ENCODE measurements at regions of chr14 and their contacts with region 1.

Region 1: DNA sequence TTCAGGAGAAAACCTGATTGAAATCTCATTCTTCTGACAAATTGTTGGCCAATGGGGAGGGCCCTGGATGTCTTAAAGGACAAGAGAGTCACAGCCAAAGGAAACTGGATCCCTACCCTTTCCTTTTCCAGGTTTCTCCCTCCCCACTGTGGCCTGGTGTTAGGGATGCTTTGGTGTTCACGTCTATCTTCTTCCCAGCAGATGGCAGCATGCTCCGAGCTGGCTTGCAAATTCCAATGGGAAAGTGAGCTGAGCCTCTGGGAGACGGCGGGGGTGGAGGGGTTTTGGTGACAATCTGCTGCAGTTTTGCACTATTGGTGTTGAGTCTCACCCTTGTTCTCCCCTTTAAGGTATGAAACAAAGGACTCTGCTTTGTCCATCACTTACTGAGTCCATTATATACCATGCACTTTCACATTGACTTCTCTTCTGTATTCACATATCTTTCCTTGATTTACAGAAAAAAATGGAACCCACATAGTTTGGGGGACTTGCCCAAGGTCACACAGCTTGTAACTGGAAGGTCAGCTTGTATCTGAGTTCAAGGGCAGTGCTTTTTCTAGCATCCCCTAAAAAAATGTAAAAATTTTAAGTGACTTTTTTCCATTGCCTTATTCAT is 39.3 kb downstream of the CCDC177 start:
- DNase-seq: no peak
- H3K4me3 ChIP-seq: no peak overlapping the region
- H3K27me3 ChIP-seq: peaks cover 10% of the 10 kb centered on the region
- CTCF ChIP-seq: peak; percentile 86

Region 2: DNA sequence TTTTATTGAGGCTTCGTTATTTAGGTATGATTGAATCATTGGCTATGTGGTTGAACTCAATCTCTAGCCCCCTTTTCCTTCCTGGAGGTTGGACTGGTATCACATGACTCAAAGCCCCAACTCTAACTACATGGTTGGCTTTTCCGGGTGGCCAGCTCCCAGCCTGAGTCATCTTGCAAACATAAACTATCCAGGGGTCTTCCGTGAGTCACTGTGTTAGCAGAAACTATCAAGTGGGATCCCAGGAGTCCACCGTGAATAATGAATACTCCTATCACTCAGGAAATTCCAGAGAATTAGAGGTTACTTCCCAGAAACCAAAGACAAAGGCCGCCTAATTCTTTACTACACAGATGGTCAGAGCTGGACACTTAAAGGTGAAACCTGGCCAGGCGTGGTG is 70.5 kb before region 1 on chr14:
- CTCF ChIA-PET with region 1: no interaction called
- POLR2A ChIA-PET with region 1: no interaction called
- DNase-seq: peak; percentile 25
- H3K4me3 ChIP-seq: no peak overlapping the region
- H3K27me3 ChIP-seq: no peaks in the 10 kb centered on the region
- CTCF ChIP-seq: no peak

Region 3: DNA sequence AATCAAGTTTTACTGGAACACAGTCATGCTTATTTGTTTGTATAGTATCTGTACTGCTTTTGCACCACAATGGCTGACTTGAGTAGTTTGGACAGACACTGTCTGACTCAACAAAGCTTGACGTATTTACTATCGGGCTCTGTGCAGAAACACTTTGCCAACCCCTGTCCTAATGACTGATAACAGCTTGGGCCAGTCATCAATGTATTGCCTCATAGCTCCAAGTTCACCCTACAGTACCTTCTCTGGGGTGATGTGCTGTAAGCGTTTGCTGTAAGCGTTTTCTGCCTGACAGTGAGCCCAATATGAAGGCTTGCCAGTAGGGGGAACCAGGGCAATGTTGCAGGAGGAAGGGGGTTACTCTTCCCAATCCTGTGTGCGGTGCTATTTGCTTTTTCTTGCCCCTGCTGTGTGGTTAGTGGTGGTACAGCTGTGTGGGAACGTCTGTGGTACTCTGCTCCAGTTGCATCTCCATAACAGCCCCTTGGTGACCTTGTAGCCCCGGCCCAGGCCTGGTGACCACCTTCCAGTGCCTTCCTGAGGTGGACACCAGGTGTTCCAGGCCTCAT is 44.8 kb after region 1 on chr14:
- CTCF ChIA-PET with region 1: interaction called, 64 read pairs
- POLR2A ChIA-PET with region 1: no interaction called
- DNase-seq: no peak
- H3K4me3 ChIP-seq: no peak overlapping the region
- H3K27me3 ChIP-seq: peaks cover 14% of the 10 kb centered on the region
- CTCF ChIP-seq: peak; percentile 64

Measured in BJ (cell line).